ENCODE measurements at regions of chr11 and their contacts with region 1.

Region 1: DNA sequence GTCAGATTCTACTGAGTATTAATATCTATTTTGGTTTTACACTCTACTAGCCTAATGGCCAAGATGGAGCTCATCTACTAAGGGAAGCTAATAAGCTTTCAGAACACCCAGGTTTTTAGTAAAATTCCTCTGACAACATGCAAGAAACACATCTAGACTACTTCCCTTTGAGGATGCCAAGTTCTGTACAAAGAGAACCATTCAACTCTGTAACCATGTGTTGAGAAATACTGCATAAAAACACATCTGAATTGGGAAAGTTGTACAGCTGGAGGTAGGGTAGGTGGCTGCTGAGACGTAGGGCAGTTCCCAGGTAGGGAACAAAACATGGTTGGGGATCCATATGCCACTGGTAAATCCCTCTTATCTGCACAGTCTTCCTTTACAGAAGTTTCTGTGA is 66.2 kb downstream of the SC5D start:
- DNase-seq: no peak
- ATAC-seq: no peak
- H3K4me3 ChIP-seq: no peak overlapping the region
- H3K27ac ChIP-seq: no peak overlapping the region
- H3K4me1 ChIP-seq: peaks cover 23% of the 10 kb centered on the region
- H3K27me3 ChIP-seq: no peaks in the 10 kb centered on the region
- CTCF ChIP-seq: no peak

Region 2: DNA sequence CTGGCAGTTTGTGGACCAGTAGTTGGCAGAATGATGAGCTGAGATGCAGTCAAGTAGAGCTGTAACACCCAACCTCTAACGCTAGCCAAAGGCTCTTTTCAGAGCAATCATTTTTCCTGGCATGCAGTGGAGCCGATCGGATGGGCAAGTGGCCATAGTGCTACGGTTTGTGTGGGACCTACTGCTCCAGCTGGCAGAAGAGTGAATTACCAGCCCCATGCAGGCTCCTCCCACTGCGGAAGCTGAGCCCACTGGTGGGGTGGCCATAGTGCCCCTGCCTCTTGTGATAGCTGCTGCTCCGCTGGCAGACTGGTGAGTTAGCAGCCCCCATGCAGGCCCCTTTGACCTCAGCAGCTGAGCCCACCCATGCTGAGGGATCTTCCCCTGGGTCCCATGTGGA is 93.2 kb before region 1 on chr11:
- CTCF ChIA-PET with region 1: no interaction called
- POLR2A ChIA-PET with region 1: interaction called, 15 read pairs
- intact Hi-C with region 1: no loop called
- DNase-seq: no peak
- ATAC-seq: no peak
- H3K4me3 ChIP-seq: no peak overlapping the region
- H3K27ac ChIP-seq: no peak overlapping the region
- H3K4me1 ChIP-seq: no peaks in the 10 kb centered on the region
- H3K27me3 ChIP-seq: 0 out of 2 replicates have a peak, but pooled peaks cover 4% of the 10 kb centered on the region
- CTCF ChIP-seq: no peak